ENCODE measurements at regions of chr6 and their contacts with region 1.

Region 1: DNA sequence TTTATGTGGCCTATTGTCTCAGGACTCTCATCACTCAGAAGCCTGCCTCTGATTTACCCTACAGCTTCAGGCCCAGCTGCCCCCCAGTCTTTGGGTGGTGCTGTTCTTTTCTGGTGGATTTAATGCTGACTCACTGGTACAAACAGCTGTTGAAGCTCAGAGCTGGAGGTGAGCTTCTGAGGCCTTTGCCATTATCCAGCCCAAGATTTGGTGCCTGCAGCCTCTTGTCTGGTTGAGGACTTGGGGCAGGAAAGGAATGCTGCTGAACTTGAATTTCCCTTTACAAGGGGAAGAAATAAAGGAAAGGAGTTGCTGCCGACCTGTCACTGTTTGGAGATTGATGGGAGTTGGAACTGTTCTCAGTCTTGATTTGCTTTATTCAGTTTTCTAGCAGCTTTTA is 19.8 kb downstream of the ABCF1 start:
- DNase-seq: no peak
- ATAC-seq: no peak

Region 2: DNA sequence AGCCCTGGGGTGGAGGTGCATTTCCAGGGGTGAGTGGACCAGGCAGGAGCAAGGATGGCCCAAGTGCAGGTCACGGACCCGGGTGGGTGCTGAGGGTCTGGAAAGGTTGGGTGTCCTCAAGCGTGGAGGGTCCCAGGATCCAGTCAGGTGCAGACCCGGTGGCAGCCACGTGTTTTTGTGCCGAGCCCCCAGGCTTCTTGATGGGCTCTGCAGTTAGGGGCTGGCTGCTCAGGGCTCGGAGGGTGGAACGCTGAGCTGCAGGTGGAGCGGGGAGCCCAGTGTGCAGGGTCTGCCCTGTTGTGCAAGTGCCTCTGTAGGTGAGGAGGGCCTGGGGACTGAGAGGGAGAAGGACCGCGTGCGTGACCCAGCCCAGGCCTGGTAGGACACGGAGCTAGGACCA is 172.5 kb before region 1 on chr6:
- intact Hi-C with region 1: no loop called
- DNase-seq: no peak
- ATAC-seq: no peak

Region 3: DNA sequence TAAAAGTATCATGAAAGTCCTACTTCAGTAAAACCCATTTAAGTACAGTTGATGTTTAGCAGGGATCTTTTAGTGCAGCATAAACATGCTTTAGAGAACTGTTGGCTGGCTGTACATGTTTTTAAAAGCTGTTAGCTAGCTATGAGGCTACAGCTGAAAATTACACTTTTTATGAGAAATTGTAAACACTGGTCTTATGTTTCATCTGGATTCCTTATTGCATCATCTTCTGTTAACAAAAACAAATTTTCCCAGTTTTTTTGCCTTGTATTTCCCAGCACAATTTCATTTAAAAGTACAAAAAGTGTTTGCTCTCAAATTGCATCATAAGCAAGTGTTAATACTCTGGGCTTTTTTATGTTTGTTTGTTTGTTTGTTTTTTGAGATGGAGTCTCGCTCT is 120.0 kb before region 1 on chr6:
- intact Hi-C with region 1: loop called in 1 of 2 experiments (anchors 10 kb)
- DNase-seq: no peak
- ATAC-seq: no peak

Region 4: GRCh38 chr6:30781395-30781742 is 190.4 kb after region 1 on chr6:
- intact Hi-C with region 1: no loop called
- DNase-seq: no peak
- ATAC-seq: peak; percentile 5

Measured in left colon (tissue), 2 donors.